ENCODE measurements at regions of chr15 and their contacts with region 1.

Region 1: GRCh38 chr15:41230650-41231533 is at the starts of genes CHP1 and EXD1:
- DNase-seq: peak; percentile 93 to 99 (median 98)
- H3K4me3 ChIP-seq: peak within 1 kb of the TSS; percentile 50 to 97 (median 86)
- H3K27ac ChIP-seq: peak within 1 kb of the TSS; percentile 35 to 95 (median 86)
- H3K27me3 ChIP-seq: no peaks in the 10 kb centered on the region
- CTCF ChIP-seq: peak; percentile 74 to 99 (median 93)
- total RNA-seq, gene CHP1: 57.8 to 139 (median 95.3) TPM
- total RNA-seq, gene EXD1: 0.16 to 1.6 (median 0.41) TPM in 73 of 120 experiments, not detected in the others

Region 2: GRCh38 chr15:40440743-40441564 is 789.9 kb before region 1 on chr15 and contains the start of gene BAHD1:
- intact Hi-C with region 1: no loop called
- DNase-seq: peak; percentile 95 to 100 (median 98)
- H3K4me3 ChIP-seq: peak within 1 kb of the TSS; percentile 52 to 94 (median 83)
- H3K27ac ChIP-seq: peak within 1 kb of the TSS in 43 of 59 donors; percentile 5 to 90 (median 66)
- H3K27me3 ChIP-seq: peaks cover 0 to 10% (median 0%) of the 10 kb centered on the region in 45 donors
- CTCF ChIP-seq: peak in 33 of 56 donors; percentile 9 to 56 (median 32)
- total RNA-seq, gene BAHD1: 16.2 to 33.8 (median 21.3) TPM

Region 3: GRCh38 chr15:41116116-41116871 is 114.6 kb before region 1 on chr15 and contains the start of gene INO80:
- intact Hi-C with region 1: loop called (anchors 1 to 2 kb)
- DNase-seq: peak; percentile 87 to 99 (median 96)
- H3K4me3 ChIP-seq: peak within 1 kb of the TSS; percentile 68 to 99 (median 92)
- H3K27ac ChIP-seq: peak within 1 kb of the TSS; percentile 89 to 100 (median 99)
- H3K27me3 ChIP-seq: no peaks in the 10 kb centered on the region
- CTCF ChIP-seq: peak in 27 of 56 donors; percentile 7 to 45 (median 26)
- total RNA-seq, gene INO80: 15.8 to 35.4 (median 24.2) TPM

Region 4: DNA sequence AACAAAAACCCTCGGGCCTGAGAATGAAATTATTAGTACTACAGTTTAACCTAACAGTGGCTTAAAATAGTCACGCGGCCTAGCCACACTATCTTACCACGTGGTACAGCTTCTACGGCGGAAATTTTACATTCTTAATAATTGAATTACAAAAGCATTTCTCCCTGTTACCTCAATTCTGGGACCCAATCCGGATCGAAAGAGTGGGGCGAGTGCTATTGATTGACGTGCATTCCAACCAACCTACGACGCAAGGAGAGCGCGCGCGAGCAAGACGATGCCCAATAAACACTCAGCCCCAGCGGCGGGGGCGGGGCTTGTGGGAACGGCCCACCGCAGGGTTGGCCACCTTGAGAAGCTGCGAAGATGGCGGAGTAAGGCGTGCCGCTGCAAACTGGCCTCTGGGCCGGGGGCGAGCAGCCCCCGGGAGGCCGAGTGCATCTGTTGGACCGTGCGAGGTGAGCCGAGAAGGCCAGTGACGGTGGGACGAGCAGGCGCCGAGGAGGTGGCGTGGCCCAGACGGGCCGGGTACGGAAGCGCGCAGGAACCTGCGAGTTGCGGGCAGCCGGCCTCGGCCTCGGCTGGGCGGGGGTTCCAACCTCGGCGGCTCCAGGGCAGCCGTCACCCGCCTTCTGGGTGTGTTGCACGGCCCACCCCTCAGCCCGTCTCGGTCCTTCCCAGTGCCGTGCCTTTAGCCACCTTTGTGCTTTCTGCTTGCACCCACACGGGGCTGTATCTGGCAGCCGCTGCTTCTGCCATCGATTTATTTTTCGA is 52.9 kb after region 1 on chr15:
- intact Hi-C with region 1: loop called (anchors 2 kb)
- DNase-seq: peak; percentile 95 to 98 (median 97)
- H3K4me3 ChIP-seq: peak overlapping the region; percentile 66 to 100 (median 95)
- H3K27ac ChIP-seq: peak overlapping the region; percentile 26 to 97 (median 88)
- H3K27me3 ChIP-seq: no peaks in the 10 kb centered on the region
- CTCF ChIP-seq: peak in 12 of 56 donors; percentile 7 to 41 (median 22)

Region 5: DNA sequence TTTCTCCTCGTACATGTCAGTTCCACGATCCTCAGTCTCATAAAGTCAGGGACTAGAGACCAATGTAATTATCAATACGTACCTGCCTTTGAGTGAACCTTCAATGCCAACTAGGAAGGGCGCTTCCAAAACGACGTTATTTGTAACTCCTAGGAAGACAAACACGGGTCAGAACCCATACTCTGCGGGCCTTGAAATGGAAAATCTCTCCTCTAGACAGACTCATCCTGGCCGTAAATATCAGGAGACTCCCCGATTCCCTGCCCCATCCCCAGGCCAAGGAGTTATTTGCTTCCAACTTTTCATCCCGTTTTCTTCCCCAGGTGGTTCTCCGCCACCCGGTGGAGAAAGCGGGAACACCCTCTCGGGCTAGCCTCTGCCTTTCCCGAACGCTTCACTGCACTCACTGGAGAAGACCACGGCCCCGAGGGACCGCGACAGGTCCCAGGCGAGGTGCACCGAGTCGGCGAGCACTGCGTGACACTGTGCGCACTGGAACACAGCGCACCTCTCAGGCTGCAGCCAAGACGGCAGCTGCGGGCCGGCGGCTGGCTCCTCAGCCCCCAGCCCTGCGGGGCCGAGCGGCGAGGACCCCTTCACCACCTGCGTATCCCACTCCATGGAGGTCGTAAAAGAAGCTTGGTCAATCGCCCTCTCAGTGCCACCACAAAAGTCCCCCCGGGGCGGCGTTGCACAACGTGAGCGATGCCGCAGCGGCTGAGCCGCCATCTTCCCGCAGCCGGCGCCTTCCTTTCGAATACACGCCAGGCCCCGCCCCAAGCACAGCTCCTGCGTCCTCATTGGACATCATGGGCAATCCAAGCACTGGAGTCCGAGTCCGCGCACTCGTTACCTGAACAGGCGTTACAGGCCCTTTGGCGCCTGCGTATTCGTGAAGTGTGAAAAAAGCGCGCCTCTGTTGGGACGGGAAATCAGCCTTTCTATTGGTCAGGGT is 101.2 kb after region 1 on chr15 and contains the start of gene OIP5:
- intact Hi-C with region 1: loop called in 1 of 2 experiments (anchors 5 kb)
- DNase-seq: peak; percentile 90 to 98 (median 96)
- H3K4me3 ChIP-seq: peak within 1 kb of the TSS; percentile 65 to 100 (median 89)
- H3K27ac ChIP-seq: peak within 1 kb of the TSS in 33 of 59 donors; percentile 3 to 75 (median 33)
- H3K27me3 ChIP-seq: no peaks in the 10 kb centered on the region
- CTCF ChIP-seq: peak in 55 of 56 donors; percentile 21 to 75 (median 54)
- total RNA-seq, gene OIP5: 0.32 to 2.6 (median 0.63) TPM in 63 of 120 experiments, not detected in the others

Region 6: GRCh38 chr15:41401904-41402267 is 171.0 kb after region 1 on chr15:
- intact Hi-C with region 1: loop called (anchors 5 to 10 kb)
- DNase-seq: no peak
- H3K4me3 ChIP-seq: peak overlapping the region; percentile 69 to 100 (median 90)
- H3K27ac ChIP-seq: peak overlapping the region in 54 of 59 donors; percentile 21 to 92 (median 76)
- H3K27me3 ChIP-seq: no peaks in the 10 kb centered on the region
- CTCF ChIP-seq: no peak

Region 7: DNA sequence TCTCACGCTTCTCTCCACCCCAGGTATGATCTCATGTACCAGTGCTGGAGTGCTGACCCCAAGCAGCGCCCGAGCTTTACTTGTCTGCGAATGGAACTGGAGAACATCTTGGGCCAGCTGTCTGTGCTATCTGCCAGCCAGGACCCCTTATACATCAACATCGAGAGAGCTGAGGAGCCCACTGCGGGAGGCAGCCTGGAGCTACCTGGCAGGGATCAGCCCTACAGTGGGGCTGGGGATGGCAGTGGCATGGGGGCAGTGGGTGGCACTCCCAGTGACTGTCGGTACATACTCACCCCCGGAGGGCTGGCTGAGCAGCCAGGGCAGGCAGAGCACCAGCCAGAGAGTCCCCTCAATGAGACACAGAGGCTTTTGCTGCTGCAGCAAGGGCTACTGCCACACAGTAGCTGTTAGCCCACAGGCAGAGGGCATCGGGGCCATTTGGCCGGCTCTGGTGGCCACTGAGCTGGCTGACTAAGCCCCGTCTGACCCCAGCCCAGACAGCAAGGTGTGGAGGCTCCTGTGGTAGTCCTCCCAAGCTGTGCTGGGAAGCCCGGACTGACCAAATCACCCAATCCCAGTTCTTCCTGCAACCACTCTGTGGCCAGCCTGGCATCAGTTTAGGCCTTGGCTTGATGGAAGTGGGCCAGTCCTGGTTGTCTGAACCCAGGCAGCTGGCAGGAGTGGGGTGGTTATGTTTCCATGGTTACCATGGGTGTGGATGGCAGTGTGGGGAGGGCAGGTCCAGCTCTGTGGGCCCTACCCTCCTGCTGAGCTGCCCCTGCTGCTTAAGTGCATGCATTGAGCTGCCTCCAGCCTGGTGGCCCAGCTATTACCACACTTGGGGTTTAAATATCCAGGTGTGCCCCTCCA is 347.2 kb after region 1 on chr15:
- intact Hi-C with region 1: loop called in 1 of 2 experiments (anchors 10 kb)
- DNase-seq: peak in 7 of 10 donors; percentile 56 to 78 (median 69)
- H3K4me3 ChIP-seq: no peak overlapping the region
- H3K27ac ChIP-seq: peak overlapping the region in 58 of 59 donors; percentile 7 to 90 (median 76)
- H3K27me3 ChIP-seq: no peaks in the 10 kb centered on the region
- CTCF ChIP-seq: no peak